ENCODE measurements at regions of chr3 and their contacts with region 1.

Region 1: DNA sequence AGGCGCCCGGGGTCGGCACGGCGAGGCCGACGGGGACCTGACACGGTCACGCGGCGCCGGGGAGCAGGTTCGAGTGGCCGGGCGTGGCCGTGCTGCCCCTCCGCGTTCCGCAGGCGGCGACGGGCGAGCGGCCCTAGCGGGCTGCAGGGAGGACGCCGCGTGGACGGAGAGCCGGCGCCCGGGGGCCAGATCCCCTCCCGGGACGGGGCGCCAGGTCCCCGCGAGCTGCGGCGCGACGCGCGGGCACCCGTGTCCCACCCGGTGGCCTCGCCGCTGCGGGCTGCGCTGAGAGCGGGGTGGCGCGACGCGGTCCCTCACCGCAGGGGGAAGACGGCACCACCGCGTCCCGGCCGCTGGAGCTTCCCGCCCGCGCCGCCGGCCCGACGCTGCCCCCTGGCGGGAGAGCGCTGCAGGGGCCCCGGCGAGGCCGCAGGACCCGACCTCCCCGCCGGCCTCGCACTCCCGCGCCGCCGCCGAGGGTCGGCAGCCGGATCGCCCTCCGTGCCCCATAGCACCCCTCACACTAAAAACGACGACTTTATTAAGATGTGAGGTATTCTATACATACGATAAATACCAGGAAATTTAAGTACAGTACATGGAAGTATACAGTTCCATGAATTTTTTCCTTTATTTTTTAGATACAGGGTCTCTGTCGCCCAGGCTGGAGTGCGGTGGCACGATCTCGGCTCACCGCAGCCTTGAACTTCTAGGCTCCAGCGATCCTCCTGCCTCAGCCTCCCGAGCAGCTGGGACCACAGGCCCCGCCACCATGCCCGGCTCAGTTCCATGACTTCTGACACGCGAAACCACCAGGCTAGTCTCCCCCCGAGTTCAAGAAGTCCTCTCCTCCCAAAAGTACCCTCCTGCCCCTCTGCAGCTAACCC is 1.3 kb upstream of the PIGZ start:
- DNase-seq: peak; percentile 57
- H3K4me3 ChIP-seq: peak overlapping the region; percentile 60 to 81 (median 65)
- H3K27ac ChIP-seq: no peak overlapping the region
- H3K4me1 ChIP-seq: peaks cover 3% of the 10 kb centered on the region
- H3K27me3 ChIP-seq: peaks cover 0 to 2% of the 10 kb centered on the region in 2 experiments
- CTCF ChIP-seq: peak; percentile 59 to 68
- POLR2A ChIP-seq: peak; percentile 38

Region 2: DNA sequence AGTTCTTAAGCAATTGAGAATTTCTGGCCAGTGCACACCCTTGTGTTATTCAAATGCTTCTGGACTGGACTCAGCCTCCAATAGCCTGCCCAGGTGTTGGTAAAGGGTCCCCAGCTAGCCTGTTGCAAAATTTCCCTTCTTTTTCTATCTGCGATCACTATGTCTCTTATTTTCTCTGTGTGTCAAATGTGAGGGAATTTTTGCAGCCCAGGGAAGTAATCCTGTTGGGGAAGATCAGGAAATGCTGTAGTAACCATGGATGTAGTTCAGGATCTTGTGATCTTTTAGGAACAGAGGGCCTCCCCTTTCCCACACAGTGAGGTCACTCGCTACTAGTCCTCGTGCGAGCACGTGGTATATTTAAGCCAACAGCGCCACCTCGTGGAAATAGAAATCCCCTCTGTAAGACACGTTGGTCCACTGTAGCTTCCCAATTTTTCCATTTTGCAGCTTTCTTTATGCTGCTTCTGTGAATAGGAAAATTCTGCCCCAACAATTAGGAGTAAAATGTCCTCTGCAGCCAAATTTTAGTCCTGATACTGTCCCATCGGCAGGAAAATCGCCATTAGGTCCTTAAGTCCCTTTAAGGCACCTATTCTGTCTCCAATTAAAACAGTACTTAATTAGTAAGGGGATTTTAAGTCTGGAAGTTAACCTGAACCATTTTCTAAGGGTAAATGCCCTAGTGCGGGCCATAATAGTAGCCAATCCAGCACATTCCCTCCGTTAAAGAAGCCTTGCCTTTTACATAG is 450.8 kb before region 1 on chr3:
- CTCF ChIA-PET with region 1: interaction called, 14 read pairs
- POLR2A ChIA-PET with region 1: no interaction called
- dilution Hi-C with region 1: no loop called
- intact Hi-C with region 1: loop called (anchors 5 kb)
- DNase-seq: peak; percentile 62
- H3K4me3 ChIP-seq: no peak overlapping the region
- H3K27ac ChIP-seq: no peak overlapping the region
- H3K4me1 ChIP-seq: no peaks in the 10 kb centered on the region
- H3K27me3 ChIP-seq: no peaks in the 10 kb centered on the region
- CTCF ChIP-seq: peak; percentile 32 to 44
- POLR2A ChIP-seq: no peak

Region 3: GRCh38 chr3:196739671-196740480 is 230.0 kb before region 1 on chr3 and contains the start of gene PAK2:
- CTCF ChIA-PET with region 1: no interaction called
- POLR2A ChIA-PET with region 1: no interaction called
- dilution Hi-C with region 1: no loop called
- intact Hi-C with region 1: loop called (anchors 1 kb)
- DNase-seq: peak; percentile 85
- H3K4me3 ChIP-seq: peak within 1 kb of the TSS; percentile 78 to 95 (median 85)
- H3K27ac ChIP-seq: peak within 1 kb of the TSS; percentile 61
- H3K4me1 ChIP-seq: peaks cover 5% of the 10 kb centered on the region
- H3K27me3 ChIP-seq: no peaks in the 10 kb centered on the region
- CTCF ChIP-seq: no peak
- POLR2A ChIP-seq: peak; percentile 78
- total RNA-seq, gene PAK2: 85.8 and 98.9 TPM in 2 replicates

Region 4: DNA sequence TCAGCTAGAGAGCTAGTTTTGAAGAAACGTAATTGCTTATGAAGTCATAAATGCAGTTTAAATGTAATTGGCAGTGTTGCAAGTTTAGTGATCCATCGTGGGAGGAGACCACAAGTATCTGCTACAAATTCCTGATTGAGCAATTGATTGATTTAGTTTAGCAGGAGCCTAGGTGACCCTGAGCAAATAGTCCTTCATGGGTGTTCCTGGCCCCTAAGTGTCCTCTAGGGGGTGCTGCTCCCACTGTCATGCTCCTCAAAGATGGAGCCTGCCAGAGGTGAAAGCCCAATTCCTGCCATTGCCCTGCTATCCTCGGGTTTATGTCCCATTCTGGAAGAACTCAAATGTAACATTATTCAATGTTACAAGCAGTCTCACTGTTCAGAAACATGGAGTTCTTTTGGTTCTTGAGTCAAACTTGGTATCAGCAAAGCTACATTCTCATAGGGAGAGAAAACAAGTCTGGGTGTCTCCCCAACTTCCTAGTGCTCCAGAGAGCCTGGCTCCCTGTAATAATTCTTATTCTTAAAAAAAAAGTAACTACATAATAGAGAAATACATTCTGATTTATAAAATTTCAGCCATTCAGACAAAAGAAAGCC is 132.0 kb before region 1 on chr3:
- CTCF ChIA-PET with region 1: interaction called, 24 read pairs
- POLR2A ChIA-PET with region 1: no interaction called
- dilution Hi-C with region 1: no loop called
- intact Hi-C with region 1: loop called (anchors 1 kb)
- DNase-seq: peak; percentile 56
- H3K4me3 ChIP-seq: no peak overlapping the region
- H3K27ac ChIP-seq: no peak overlapping the region
- H3K4me1 ChIP-seq: no peaks in the 10 kb centered on the region
- H3K27me3 ChIP-seq: no peaks in the 10 kb centered on the region
- CTCF ChIP-seq: peak; percentile 82 to 85
- POLR2A ChIP-seq: no peak

Region 5: GRCh38 chr3:196942226-196942914 is 27.5 kb before region 1 on chr3 and contains the start of gene NCBP2:
- CTCF ChIA-PET with region 1: interaction called, 15 read pairs
- POLR2A ChIA-PET with region 1: no interaction called
- dilution Hi-C with region 1: no loop called
- intact Hi-C with region 1: loop called (anchors 1 kb)
- DNase-seq: peak; percentile 98
- H3K4me3 ChIP-seq: peak within 1 kb of the TSS; percentile 73 to 93 (median 85)
- H3K27ac ChIP-seq: peak within 1 kb of the TSS; percentile 76
- H3K4me1 ChIP-seq: peaks cover 16% of the 10 kb centered on the region
- H3K27me3 ChIP-seq: no peaks in the 10 kb centered on the region
- CTCF ChIP-seq: peak; percentile 64 to 81
- POLR2A ChIP-seq: peak; percentile 90
- total RNA-seq, gene NCBP2: 73.4 and 76.1 TPM in 2 replicates

Region 6: DNA sequence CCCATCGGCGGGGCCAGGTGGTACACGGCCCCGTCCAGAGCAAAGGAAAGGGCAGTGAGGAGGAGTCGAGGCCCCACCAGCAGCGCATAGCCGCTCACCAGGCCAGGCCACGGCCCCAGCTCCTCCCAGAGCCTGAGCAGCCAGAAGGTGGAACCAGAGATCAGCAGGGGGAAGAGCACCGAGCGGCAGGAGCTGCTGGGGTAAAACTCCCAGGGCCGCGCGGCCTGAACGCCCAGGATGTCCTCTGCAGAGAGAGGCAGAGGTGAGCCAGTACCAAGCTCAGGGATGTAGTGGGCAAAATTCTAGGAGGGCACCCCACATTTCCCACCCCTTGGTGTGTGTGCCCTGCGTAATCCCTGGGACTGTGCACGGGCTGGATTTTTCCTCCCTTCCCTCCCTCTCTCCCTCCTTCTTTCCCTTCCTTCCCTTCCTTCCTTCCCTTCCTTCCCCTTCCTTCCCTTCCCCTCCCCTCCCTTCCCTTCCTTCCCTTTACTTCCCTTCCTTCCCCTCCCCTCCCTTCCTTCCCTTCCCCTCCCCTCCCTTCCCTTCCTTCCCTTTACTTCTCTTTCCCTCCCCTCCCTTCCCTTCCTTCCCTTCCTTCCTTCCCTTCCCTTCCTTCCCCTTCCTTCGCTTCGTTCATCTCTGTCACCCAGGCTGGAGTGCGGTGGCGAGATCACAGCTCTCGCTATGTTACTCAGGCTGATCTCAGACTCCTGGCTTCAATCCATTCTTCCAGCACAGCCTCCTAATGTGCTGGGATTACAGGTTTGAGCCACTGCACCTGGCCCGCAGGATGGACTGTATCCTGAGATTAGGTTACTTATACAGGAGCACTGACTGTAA is 21.2 kb before region 1 on chr3:
- CTCF ChIA-PET with region 1: interaction called, 15 read pairs
- POLR2A ChIA-PET with region 1: no interaction called
- dilution Hi-C with region 1: no loop called
- intact Hi-C with region 1: no loop called
- DNase-seq: no peak
- H3K4me3 ChIP-seq: no peak overlapping the region
- H3K27ac ChIP-seq: no peak overlapping the region
- H3K4me1 ChIP-seq: peaks cover 2% of the 10 kb centered on the region
- H3K27me3 ChIP-seq: no peaks in the 10 kb centered on the region
- CTCF ChIP-seq: no peak
- POLR2A ChIP-seq: no peak

Measured in endothelial cell of umbilical vein (primary cell).